ENCODE measurements at regions of chr13 and their contacts with region 1.

Region 1: DNA sequence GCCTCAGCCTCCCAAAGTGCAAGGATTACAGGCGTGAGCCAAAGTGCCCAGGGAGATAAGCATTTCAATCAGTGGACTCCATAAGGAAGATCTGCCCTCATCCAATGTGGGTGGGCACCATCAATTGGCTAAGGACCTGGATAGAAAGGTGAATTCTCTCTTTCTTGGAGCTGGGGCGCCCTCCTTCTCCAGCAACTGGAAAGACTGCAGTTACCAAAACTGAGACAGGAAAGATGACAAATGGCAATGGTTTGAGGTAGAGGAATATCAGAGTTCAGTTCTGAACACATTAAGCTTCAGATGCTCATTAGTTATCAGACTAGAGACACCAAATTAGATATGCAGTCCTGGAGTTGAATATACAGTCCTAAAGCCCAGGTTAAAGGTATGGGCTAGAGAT is 10.5 kb upstream of the ELF1 start:
- DNase-seq: no peak
- H3K4me3 ChIP-seq: no peak overlapping the region
- H3K27ac ChIP-seq: no peak overlapping the region
- H3K4me1 ChIP-seq: no peaks in the 10 kb centered on the region
- H3K27me3 ChIP-seq: no peaks in the 10 kb centered on the region
- CTCF ChIP-seq: peak; percentile 13 to 71 (median 69)
- EP300 ChIP-seq: no peak
- POLR2A ChIP-seq: no peak
- RAD21 ChIP-seq: peak; percentile 86 to 90

Region 2: DNA sequence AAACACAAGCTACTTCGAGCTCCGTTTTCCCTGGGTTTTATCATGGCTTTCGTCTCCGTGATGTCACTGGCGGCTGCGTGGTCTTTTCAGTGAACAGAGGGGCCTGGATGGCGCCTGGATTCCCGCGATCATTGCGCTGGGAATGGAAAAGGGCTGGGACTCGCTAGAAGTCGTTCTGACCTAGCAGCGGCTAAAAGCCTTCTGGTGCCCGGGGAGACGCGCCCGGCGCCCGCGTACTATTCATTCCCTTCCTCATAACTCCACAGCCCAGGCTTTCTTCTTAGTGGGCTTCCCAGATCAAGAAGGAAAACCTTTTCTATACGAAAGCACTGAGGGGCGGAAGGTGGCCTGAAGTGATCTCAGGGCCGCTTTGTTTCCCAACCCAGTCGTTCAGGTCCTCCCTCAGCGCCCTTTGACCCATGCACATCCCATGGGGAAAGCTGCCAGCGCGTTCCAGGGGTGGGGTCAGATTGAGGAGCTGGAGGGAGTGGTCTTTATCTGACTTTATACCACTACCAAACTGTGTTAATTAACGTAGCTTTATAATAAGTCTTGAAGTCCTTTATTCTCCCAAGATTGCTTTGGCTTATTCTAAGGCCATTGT is 107.1 kb before region 1 on chr13:
- CTCF ChIA-PET with region 1: interaction called, 15 read pairs
- POLR2A ChIA-PET with region 1: no interaction called
- DNase-seq: peak in 1 of 2 experiments; percentile 49
- H3K4me3 ChIP-seq: no peak overlapping the region
- H3K27ac ChIP-seq: no peak overlapping the region
- H3K4me1 ChIP-seq: no peaks in the 10 kb centered on the region; a peak in 2 of 7 replicates
- H3K27me3 ChIP-seq: no peaks in the 10 kb centered on the region
- CTCF ChIP-seq: no peak
- EP300 ChIP-seq: no peak
- POLR2A ChIP-seq: no peak
- RAD21 ChIP-seq: no peak

Region 3: DNA sequence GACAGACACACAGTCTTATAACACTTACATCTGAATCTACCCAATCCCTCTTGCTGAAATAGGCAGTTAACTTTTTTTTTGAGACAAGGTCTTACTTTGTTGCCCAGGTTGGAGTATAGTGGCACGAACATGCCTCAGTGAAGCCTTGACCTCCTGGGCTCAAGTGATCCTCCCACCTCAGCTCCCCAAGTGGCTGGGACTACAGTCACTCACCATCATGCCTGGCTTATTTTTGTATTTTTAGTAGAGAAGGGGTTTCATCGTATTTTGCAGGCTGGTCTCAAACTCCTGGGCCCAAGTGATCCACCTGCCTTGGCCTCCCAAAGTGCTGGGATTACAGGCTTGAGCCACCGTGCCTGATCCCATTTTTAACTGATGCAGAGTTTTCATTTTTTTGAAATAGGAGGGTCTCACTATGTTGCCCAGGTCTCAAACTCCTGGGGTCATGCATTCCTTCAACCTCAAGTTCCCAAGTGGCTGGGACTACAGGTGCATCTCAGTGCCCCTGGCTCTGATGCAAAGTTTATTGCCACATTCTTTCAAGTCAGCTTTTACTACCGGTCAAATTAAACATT is 18.2 kb before region 1 on chr13:
- CTCF ChIA-PET with region 1: interaction called, 10 read pairs
- POLR2A ChIA-PET with region 1: no interaction called
- DNase-seq: no peak
- H3K4me3 ChIP-seq: no peak overlapping the region
- H3K27ac ChIP-seq: no peak overlapping the region
- H3K4me1 ChIP-seq: peaks cover 0 to 10% (median 1%) of the 10 kb centered on the region in 4 experiments; a peak in 4 of 7 replicates
- H3K27me3 ChIP-seq: no peaks in the 10 kb centered on the region
- CTCF ChIP-seq: no peak
- EP300 ChIP-seq: no peak
- POLR2A ChIP-seq: no peak
- RAD21 ChIP-seq: no peak

Measured in H1 (cell line).